Posterior vena cava (tissue), 2 donors: ENCODE measurements at regions of chr7 and their contacts with region 1.

Region 1: GRCh38 chr7:43553999-43554398 is 28.9 kb upstream of the STK17A start:
- DNase-seq: no peak

Region 2: GRCh38 chr7:43385856-43386255 is 168.1 kb before region 1 on chr7:
- intact Hi-C with region 1: no loop called
- DNase-seq: no peak

Region 3: GRCh38 chr7:43570688-43571365 is 16.8 kb after region 1 on chr7:
- intact Hi-C with region 1: loop called in 1 of 2 experiments (anchors 2 kb)
- DNase-seq: no peak

Region 4: GRCh38 chr7:43612599-43613589 is 58.9 kb after region 1 on chr7:
- intact Hi-C with region 1: no loop called
- DNase-seq: no peak